CD8-positive, alpha-beta T cell (primary cell): ENCODE measurements at regions of chr2 and their contacts with region 1.

Region 1: DNA sequence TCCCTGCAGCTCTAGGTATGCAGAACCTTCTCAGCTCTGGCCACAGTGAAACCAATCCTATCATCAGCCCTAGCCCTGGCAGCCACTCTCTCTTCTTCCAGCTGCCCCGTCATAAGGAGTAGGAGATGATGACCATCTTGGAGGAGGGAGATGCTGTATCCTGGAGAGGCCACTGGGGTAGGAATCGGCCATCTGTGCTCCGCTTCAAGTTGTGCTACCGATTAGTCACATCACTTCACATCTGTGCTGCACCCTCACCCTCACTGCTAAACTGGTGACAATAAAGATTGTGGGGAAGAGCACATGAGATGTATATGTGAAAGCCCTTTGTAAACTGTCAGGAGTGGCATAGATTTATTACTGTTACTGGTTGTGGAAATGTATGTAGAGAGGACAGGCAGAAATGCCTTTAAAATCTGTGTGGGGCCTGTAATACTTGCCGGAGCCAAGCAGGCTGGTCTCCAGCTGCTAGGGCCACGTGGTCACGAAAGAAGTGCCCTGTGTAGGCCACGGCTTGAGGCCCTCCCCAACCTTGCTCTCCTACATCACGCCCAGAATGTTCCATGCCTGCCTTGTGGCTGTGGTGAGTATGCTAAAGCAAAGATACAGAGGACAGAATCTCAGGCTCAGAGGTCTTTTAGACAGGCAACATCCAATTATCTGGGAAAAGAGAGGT is 236.8 kb downstream of the CLIP4 start:
- DNase-seq: no peak
- ATAC-seq: no peak
- H3K4me3 ChIP-seq: no peak overlapping the region
- H3K4me3 Mint-ChIP-seq: no peak overlapping the region
- H3K27ac ChIP-seq: no peak overlapping the region
- H3K27ac Mint-ChIP-seq: no peak overlapping the region
- H3K4me1 ChIP-seq: no peaks in the 10 kb centered on the region
- H3K4me1 Mint-ChIP-seq: no peaks in the 10 kb centered on the region
- H3K27me3 ChIP-seq: no peaks in the 10 kb centered on the region
- H3K27me3 Mint-ChIP-seq: peaks cover 5% of the 10 kb centered on the region
- CTCF ChIP-seq: no peak

Region 2: DNA sequence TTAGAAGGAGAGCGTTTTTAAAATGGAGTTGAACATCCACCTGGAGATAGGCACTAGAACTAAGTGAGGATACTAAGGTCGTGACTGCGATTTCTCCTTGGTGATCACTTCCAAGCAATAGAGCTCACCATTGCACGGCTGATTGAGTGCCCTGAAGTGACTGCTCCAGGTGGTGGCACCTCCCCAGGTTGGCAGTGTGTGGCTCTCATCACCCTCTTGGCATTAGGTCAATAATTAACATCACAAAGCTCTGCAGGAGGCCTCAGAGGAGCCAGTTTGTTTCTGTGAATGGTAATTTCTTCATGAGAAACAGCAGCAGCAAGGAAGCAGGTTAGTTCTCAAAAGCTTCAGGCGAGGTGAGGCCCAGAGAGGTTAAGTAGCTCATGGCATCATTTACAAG is 22.8 kb after region 1 on chr2:
- CTCF ChIA-PET with region 1: no interaction called
- POLR2A ChIA-PET with region 1: no interaction called
- intact Hi-C with region 1: loop called in 1 of 2 experiments (anchors 1 kb)
- DNase-seq: no peak
- ATAC-seq: no peak
- H3K4me3 ChIP-seq: no peak overlapping the region
- H3K4me3 Mint-ChIP-seq: no peak overlapping the region
- H3K27ac ChIP-seq: no peak overlapping the region
- H3K27ac Mint-ChIP-seq: no peak overlapping the region
- H3K4me1 ChIP-seq: no peaks in the 10 kb centered on the region
- H3K4me1 Mint-ChIP-seq: no peaks in the 10 kb centered on the region
- H3K27me3 ChIP-seq: no peaks in the 10 kb centered on the region
- H3K27me3 Mint-ChIP-seq: peaks cover 12% of the 10 kb centered on the region
- CTCF ChIP-seq: no peak